Natural killer cell (primary cell): ENCODE measurements at regions of chr7 and their contacts with region 1.

Region 1: GRCh38 chr7:128791121-128791961 is 427 bp upstream of the CCDC136 start:
- DNase-seq: peak; percentile 66 to 88
- ATAC-seq: peak; percentile 89 to 93 (median 91)
- H3K4me3 ChIP-seq: peak overlapping the region; percentile 88
- H3K4me3 Mint-ChIP-seq: peak overlapping the region; percentile 92
- H3K27ac ChIP-seq: peak overlapping the region; percentile 29
- H3K27ac Mint-ChIP-seq: peak overlapping the region in 1 of 2 donors; percentile 83
- H3K4me1 ChIP-seq: peaks cover 18% of the 10 kb centered on the region
- H3K4me1 Mint-ChIP-seq: peaks cover 3 to 14% of the 10 kb centered on the region in 2 donors
- H3K27me3 ChIP-seq: no peaks in the 10 kb centered on the region
- H3K27me3 Mint-ChIP-seq: no peaks in the 10 kb centered on the region
- CTCF ChIP-seq: no peak

Region 2: GRCh38 chr7:128739048-128739962 is 52.0 kb before region 1 on chr7 and contains the start of gene CALU:
- intact Hi-C with region 1: loop called (anchors 2 kb)
- DNase-seq: peak; percentile 92 to 96
- ATAC-seq: peak; percentile 96 to 99 (median 97)
- H3K4me3 ChIP-seq: peak within 1 kb of the TSS; percentile 90
- H3K4me3 Mint-ChIP-seq: peak within 1 kb of the TSS; percentile 97
- H3K27ac ChIP-seq: peak within 1 kb of the TSS; percentile 83
- H3K27ac Mint-ChIP-seq: peak within 1 kb of the TSS; percentile 97 to 99
- H3K4me1 ChIP-seq: peaks cover 11% of the 10 kb centered on the region
- H3K4me1 Mint-ChIP-seq: peaks cover 37 to 38% of the 10 kb centered on the region in 2 donors
- H3K27me3 ChIP-seq: no peaks in the 10 kb centered on the region
- H3K27me3 Mint-ChIP-seq: peaks cover 0 to 7% of the 10 kb centered on the region in 2 donors
- CTCF ChIP-seq: no peak
- total RNA-seq, gene CALU: 25.9 to 31.7 (median 27.6) TPM

Region 3: DNA sequence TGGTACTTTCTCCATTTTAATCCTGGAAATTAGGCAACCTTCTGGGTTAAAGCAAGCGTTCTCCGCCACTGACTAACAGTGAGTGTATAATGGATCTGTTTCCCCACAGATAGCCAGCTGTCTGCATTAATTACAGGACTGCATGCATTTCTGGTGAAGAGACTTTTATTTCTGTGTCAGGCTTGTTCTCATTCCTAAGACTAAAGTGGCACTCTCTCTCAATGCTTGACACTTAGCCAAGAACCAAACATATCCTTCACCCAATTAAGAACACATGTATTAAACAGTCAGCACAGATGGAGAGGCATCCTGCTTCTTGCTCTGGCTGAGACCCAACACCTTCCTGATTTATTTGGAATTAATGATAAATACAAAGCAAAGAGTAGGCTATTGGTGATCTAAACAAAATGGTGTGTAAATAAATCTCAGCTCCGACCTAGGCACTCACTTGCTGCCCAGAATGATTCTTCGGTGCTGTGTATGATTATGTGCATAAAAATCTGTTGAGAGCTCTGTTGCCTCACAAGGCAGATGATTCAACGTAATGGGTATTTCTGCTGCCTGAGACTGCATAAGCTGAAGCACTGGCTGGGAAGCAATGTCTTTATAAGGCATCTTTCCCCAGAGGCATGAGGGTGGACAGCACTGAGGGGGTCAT is 35.4 kb before region 1 on chr7:
- intact Hi-C with region 1: no loop called
- DNase-seq: no peak
- ATAC-seq: no peak
- H3K4me3 ChIP-seq: no peak overlapping the region
- H3K4me3 Mint-ChIP-seq: no peak overlapping the region
- H3K27ac ChIP-seq: no peak overlapping the region
- H3K27ac Mint-ChIP-seq: no peak overlapping the region
- H3K4me1 ChIP-seq: no peaks in the 10 kb centered on the region
- H3K4me1 Mint-ChIP-seq: peaks cover 5 to 10% of the 10 kb centered on the region in 2 donors
- H3K27me3 ChIP-seq: no peaks in the 10 kb centered on the region
- H3K27me3 Mint-ChIP-seq: no peaks in the 10 kb centered on the region
- CTCF ChIP-seq: no peak

Region 4: DNA sequence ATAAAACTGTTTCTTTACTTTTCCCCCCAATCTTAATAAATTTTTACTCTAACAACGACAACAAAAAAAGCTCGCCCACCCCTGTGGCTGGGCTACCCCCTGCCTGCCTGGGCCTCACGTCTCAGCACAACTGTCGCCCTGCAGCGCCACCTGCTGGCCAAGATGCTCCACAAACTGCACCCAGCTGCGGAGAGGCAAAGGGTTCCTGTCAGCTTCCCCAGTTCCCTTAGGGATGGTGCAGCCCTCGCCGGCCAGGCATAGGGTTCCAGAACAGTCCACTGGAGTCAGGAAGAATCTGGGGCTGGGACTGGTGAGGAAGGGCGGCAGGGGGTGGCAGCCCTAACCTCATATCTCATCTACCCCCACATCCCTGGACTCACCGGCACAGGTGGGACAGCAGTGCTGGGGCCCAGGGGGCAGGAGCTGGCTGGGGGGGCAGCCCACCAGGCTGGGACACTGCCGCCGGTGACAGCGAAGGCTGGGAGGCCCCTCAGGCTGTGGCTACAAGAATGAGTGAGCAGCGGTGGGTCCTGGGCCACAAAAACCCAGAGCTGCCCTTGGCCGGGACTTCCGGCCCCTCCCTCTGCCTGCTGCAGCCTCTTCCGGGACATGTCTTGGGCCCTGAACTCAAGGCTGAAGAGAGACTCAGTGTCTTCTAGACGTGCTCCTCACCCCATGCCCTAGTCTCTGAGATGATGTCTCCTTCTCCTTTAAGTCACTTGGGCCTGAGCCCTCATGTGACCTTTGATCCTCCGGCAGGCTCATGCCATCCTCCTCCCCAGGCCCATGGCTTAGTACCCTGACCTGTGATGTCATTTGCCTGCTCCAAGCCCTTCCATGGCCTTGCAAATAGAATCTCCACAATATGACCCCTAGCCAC is 92.5 kb after region 1 on chr7:
- intact Hi-C with region 1: no loop called
- DNase-seq: peak; percentile 82 to 92
- ATAC-seq: peak; percentile 76 to 95 (median 89)
- H3K4me3 ChIP-seq: peak overlapping the region; percentile 26
- H3K4me3 Mint-ChIP-seq: no peak overlapping the region
- H3K27ac ChIP-seq: no peak overlapping the region
- H3K27ac Mint-ChIP-seq: no peak overlapping the region
- H3K4me1 ChIP-seq: no peaks in the 10 kb centered on the region
- H3K4me1 Mint-ChIP-seq: no peaks in the 10 kb centered on the region
- H3K27me3 ChIP-seq: peaks cover 2% of the 10 kb centered on the region
- H3K27me3 Mint-ChIP-seq: peaks cover 0 to 3% of the 10 kb centered on the region in 2 donors
- CTCF ChIP-seq: peak; percentile 96